ENCODE measurements at regions of chr15 and their contacts with region 1.

Region 1: DNA sequence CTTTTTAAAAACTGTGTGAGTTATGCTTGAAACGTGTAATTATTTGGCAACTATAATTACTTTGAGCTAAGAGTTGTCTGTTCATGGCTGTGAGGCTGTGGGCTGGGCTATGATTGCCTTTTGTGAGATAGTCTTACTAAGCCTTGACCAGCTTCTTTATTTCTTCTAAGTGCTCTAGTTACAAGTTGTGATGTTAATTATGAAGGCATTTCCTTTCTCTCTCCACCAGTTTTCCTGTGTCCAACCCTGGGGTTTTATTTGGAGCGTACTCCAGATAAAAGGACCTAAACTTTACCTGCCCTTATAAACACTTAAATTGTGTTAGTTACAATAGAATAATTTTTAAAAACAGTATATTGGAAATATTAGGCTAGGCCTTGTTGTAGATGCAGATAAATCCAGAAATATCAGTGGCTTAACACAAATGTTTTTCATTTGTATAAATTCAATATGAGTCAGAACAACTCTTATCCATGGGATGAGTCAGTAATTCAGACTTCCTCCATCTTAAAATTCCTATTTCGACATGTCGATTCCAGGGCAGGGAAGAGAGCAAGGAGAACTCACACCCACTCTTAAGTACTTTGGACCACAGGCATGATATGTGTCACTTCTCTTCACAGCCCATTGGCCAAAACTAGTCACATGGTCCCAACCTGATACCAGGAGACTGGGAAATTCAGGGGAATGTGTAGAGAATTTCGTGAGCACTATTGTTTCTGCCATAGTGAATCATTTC is 17.0 kb downstream of the TMEM62 start:
- DNase-seq: peak; percentile 100
- H3K4me3 ChIP-seq: no peak overlapping the region
- H3K27ac ChIP-seq: peak overlapping the region; percentile 96
- H3K4me1 ChIP-seq: peaks cover 13% of the 10 kb centered on the region
- H3K27me3 ChIP-seq: no peaks in the 10 kb centered on the region
- CTCF ChIP-seq: no peak

Region 2: GRCh38 chr15:42933886-42934667 is 216.3 kb before region 1 on chr15:
- CTCF ChIA-PET with region 1: no interaction called
- dilution Hi-C with region 1: no loop called
- in situ Hi-C with region 1: no loop called
- intact Hi-C with region 1: no loop called
- DNase-seq: peak; percentile 20
- H3K4me3 ChIP-seq: no peak overlapping the region
- H3K27ac ChIP-seq: no peak overlapping the region
- H3K4me1 ChIP-seq: peaks cover 10% of the 10 kb centered on the region
- H3K27me3 ChIP-seq: no peaks in the 10 kb centered on the region
- CTCF ChIP-seq: no peak

Region 3: DNA sequence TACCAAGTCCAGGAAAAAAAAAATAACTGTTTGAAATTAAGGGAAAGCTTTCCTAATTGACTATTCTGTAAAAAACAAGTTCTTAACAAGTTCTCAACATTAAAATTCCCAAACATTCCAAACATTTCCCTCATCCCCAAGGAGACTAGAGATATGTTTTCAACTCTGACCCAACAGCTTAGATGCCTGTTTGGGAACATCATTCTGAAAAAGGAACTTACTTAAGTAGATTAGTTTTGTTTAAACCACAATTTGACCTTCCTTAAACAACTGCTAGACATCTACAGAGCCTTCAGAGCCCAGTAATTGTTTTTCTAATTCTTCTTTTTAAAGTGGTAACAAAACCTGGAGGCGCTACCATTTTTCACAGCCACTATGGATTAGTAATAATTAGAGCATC is 57.3 kb before region 1 on chr15:
- CTCF ChIA-PET with region 1: no interaction called
- dilution Hi-C with region 1: no loop called
- in situ Hi-C with region 1: loop called in 1 of 2 experiments (anchors 10 kb)
- intact Hi-C with region 1: no loop called
- DNase-seq: no peak
- H3K4me3 ChIP-seq: no peak overlapping the region
- H3K27ac ChIP-seq: no peak overlapping the region
- H3K4me1 ChIP-seq: peaks cover 14% of the 10 kb centered on the region
- H3K27me3 ChIP-seq: no peaks in the 10 kb centered on the region
- CTCF ChIP-seq: no peak

Region 4: GRCh38 chr15:43239732-43240491 is 89.6 kb after region 1 on chr15:
- CTCF ChIA-PET with region 1: no interaction called
- dilution Hi-C with region 1: no loop called
- in situ Hi-C with region 1: no loop called
- intact Hi-C with region 1: no loop called
- DNase-seq: peak; percentile 14
- H3K4me3 ChIP-seq: no peak overlapping the region
- H3K27ac ChIP-seq: no peak overlapping the region
- H3K4me1 ChIP-seq: peaks cover 11% of the 10 kb centered on the region
- H3K27me3 ChIP-seq: no peaks in the 10 kb centered on the region
- CTCF ChIP-seq: no peak

Measured in mammary epithelial cell (primary cell).